CD4-positive, alpha-beta T cell (primary cell): ENCODE measurements at regions of chr3 and their contacts with region 1.

Region 1: GRCh38 chr3:158727206-158728060 is 4.8 kb downstream of the RARRES1 start:
- DNase-seq: peak in 11 of 14 experiments; percentile 16 to 77 (median 30)
- ATAC-seq: peak; percentile 70
- H3K4me3 ChIP-seq: peak overlapping the region; percentile 33
- H3K4me3 Mint-ChIP-seq: peak overlapping the region; percentile 31
- H3K27ac ChIP-seq: no peak overlapping the region
- H3K27ac Mint-ChIP-seq: peak overlapping the region; percentile 47
- H3K4me1 ChIP-seq: peaks cover 32% of the 10 kb centered on the region
- H3K4me1 Mint-ChIP-seq: peaks cover 46% of the 10 kb centered on the region
- H3K27me3 ChIP-seq: peaks cover 0 to 4% of the 10 kb centered on the region in 2 experiments
- H3K27me3 Mint-ChIP-seq: peaks cover 16% of the 10 kb centered on the region
- CTCF ChIP-seq: peak; percentile 78

Region 2: GRCh38 chr3:158352551-158352950 is 374.9 kb before region 1 on chr3:
- CTCF ChIA-PET with region 1: no interaction called
- POLR2A ChIA-PET with region 1: no interaction called
- intact Hi-C with region 1: no loop called
- DNase-seq: peak in 3 of 14 experiments; percentile 6 to 11 (median 11)
- ATAC-seq: no peak
- H3K4me3 ChIP-seq: no peak overlapping the region
- H3K4me3 Mint-ChIP-seq: no peak overlapping the region
- H3K27ac ChIP-seq: no peak overlapping the region
- H3K27ac Mint-ChIP-seq: no peak overlapping the region
- H3K4me1 ChIP-seq: no peaks in the 10 kb centered on the region
- H3K4me1 Mint-ChIP-seq: no peaks in the 10 kb centered on the region
- H3K27me3 ChIP-seq: no peaks in the 10 kb centered on the region
- H3K27me3 Mint-ChIP-seq: no peaks in the 10 kb centered on the region
- CTCF ChIP-seq: no peak

Region 3: GRCh38 chr3:158762701-158763100 is 35.3 kb after region 1 on chr3:
- CTCF ChIA-PET with region 1: no interaction called
- POLR2A ChIA-PET with region 1: no interaction called
- intact Hi-C with region 1: no loop called
- DNase-seq: no peak
- ATAC-seq: no peak
- H3K4me3 ChIP-seq: no peak overlapping the region
- H3K4me3 Mint-ChIP-seq: no peak overlapping the region
- H3K27ac ChIP-seq: no peak overlapping the region
- H3K27ac Mint-ChIP-seq: no peak overlapping the region
- H3K4me1 ChIP-seq: no peaks in the 10 kb centered on the region
- H3K4me1 Mint-ChIP-seq: no peaks in the 10 kb centered on the region
- H3K27me3 ChIP-seq: no peaks in the 10 kb centered on the region
- H3K27me3 Mint-ChIP-seq: no peaks in the 10 kb centered on the region
- CTCF ChIP-seq: no peak

Region 4: DNA sequence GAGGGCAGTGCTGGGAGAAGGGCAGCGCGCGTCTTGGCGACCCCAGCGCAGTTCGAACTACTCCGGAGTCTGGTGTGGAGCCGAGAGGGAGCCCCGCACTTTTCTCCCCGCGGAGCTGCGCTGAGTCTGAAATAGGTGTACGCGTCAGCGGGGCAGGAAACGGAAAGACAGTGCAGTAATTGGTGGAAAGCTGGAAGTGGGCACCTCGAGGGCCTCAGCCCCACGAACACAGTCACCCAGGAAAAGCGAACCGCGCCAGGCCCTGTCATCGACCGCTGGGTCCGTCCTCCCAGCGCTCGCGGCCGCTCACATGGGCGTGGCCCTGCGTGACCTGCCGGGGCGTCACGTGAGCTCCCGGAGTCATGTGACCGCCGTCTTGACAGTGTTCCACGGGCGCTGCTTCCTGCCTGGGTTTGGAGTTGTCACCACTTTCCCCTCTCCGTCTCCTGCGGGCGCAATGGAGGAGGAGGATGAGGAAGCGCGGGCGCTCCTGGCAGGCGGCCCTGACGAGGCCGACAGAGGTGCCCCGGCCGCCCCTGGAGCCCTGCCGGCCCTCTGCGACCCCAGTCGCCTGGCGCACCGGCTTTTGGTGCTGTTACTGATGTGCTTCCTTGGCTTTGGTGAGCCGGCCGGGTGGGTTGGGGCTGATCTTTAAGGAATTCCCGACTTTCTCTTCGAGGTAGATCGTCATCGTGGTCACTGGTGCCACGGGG is 74.4 kb after region 1 on chr3 and contains the start of gene MFSD1:
- CTCF ChIA-PET with region 1: no interaction called
- POLR2A ChIA-PET with region 1: interaction called, 20 read pairs
- intact Hi-C with region 1: no loop called
- DNase-seq: peak; percentile 71 to 95 (median 83)
- ATAC-seq: peak; percentile 91
- H3K4me3 ChIP-seq: peak within 1 kb of the TSS; percentile 89
- H3K4me3 Mint-ChIP-seq: peak within 1 kb of the TSS; percentile 92
- H3K27ac ChIP-seq: peak within 1 kb of the TSS; percentile 78 to 80
- H3K27ac Mint-ChIP-seq: peak within 1 kb of the TSS; percentile 91
- H3K4me1 ChIP-seq: peaks cover 18% of the 10 kb centered on the region
- H3K4me1 Mint-ChIP-seq: peaks cover 58% of the 10 kb centered on the region
- H3K27me3 ChIP-seq: no peaks in the 10 kb centered on the region
- H3K27me3 Mint-ChIP-seq: no peaks in the 10 kb centered on the region
- CTCF ChIP-seq: no peak
- total RNA-seq, gene MFSD1: 7.2 to 7.6 TPM

Region 5: GRCh38 chr3:159260049-159260662 is 532.7 kb after region 1 on chr3:
- CTCF ChIA-PET with region 1: no interaction called
- POLR2A ChIA-PET with region 1: no interaction called
- intact Hi-C with region 1: loop called in 1 of 2 experiments (anchors 2 kb)
- DNase-seq: peak in 8 of 14 experiments; percentile 2 to 57 (median 22)
- ATAC-seq: no peak
- H3K4me3 ChIP-seq: no peak overlapping the region
- H3K4me3 Mint-ChIP-seq: no peak overlapping the region
- H3K27ac ChIP-seq: no peak overlapping the region
- H3K27ac Mint-ChIP-seq: no peak overlapping the region
- H3K4me1 ChIP-seq: no peaks in the 10 kb centered on the region
- H3K4me1 Mint-ChIP-seq: no peaks in the 10 kb centered on the region
- H3K27me3 ChIP-seq: no peaks in the 10 kb centered on the region
- H3K27me3 Mint-ChIP-seq: peaks cover 20% of the 10 kb centered on the region
- CTCF ChIP-seq: peak; percentile 74